PC-3 (cell line): ENCODE measurements at regions of chrX and their contacts with region 1.

Region 1: GRCh38 chrX:65667503-65668376 is at the start of gene MSN:
- DNase-seq: peak; percentile 66
- ATAC-seq: peak; percentile 71
- H3K4me3 ChIP-seq: peak within 1 kb of the TSS; percentile 99
- H3K27ac ChIP-seq: peak within 1 kb of the TSS; percentile 99
- H3K4me1 ChIP-seq: peaks cover 34% of the 10 kb centered on the region
- H3K27me3 ChIP-seq: no peaks in the 10 kb centered on the region
- CTCF ChIP-seq: 0 out of 2 replicates have a peak, but pooled peaks have one; percentile 13
- total RNA-seq, gene MSN: 308 and 350 TPM in 2 replicates

Region 2: DNA sequence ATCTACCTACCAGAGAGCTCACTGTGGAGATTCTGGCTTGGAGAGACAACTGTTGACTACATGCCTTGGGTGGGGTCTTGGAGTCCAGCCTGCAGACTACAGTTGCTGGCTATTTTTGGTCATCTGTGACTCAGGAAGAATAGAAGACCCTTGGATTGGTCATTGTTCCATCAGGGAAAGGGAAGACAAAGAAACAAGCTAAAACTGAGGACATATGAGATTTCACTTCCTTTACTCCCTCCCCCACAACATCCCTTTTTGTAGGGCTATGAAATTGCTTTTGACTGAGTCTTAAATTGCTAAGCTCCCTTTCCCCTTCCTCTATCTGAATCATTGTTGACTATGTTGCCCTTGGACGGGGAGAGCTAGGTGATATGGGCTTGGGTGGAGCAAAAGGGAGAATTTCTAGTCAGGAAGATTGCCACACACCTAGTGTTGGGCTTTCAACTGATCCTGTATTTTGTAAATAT is 11.4 kb after region 1 on chrX:
- CTCF ChIA-PET with region 1: interaction called, 3 read pairs
- POLR2A ChIA-PET with region 1: interaction called, 15 read pairs
- intact Hi-C with region 1: no loop called
- DNase-seq: peak; percentile 93
- ATAC-seq: peak; percentile 83
- H3K4me3 ChIP-seq: peak overlapping the region; percentile 52
- H3K27ac ChIP-seq: peak overlapping the region; percentile 98
- H3K4me1 ChIP-seq: peaks cover 56% of the 10 kb centered on the region
- H3K27me3 ChIP-seq: no peaks in the 10 kb centered on the region
- CTCF ChIP-seq: no peak

Region 3: DNA sequence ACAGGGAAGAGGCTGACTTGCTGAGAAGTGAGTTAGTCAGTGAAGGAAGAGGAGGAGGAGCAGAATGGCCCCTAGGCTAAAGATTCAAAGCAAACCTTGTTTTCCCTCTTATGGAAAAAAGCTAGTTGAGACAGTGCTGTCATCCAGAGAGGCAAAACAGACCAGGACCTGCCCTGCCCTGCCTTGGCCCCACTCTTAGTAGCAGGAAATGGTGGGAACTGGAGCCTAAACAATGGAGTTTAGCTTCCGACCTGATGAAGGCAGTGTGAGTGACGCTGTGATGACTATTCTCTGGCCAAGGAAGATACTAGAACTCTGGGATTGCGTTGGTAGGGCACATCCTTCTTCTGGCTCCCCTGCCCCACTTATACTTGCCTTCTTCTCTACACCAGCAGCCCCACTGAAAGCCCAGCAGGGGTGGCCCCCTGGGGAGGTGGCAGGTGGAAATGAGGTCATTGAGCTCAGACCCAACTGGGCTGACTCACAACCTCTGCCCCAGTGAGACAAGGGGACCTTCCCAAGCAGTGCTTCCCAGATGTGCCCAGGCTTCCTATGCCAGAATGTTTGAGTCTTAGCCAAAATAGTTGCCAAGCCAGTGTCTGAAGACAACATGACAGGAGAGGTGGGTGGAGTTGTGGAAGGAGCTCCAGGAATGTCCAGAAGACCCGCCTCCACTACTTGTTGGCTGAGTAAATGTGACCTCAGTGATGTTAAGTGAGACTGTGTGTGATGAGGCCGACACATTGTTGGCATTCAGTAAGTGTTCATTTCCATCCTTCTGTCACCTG is 38.5 kb after region 1 on chrX:
- CTCF ChIA-PET with region 1: interaction called, 4 read pairs
- POLR2A ChIA-PET with region 1: interaction called, 4 read pairs
- intact Hi-C with region 1: loop called (anchors 5 kb)
- DNase-seq: peak; percentile 69
- ATAC-seq: peak; percentile 46
- H3K4me3 ChIP-seq: no peak overlapping the region
- H3K27ac ChIP-seq: peak overlapping the region; percentile 68
- H3K4me1 ChIP-seq: peaks cover 39% of the 10 kb centered on the region
- H3K27me3 ChIP-seq: no peaks in the 10 kb centered on the region
- CTCF ChIP-seq: no peak